Posterior cingulate gyrus (tissue), 11 donors: ENCODE measurements at regions of chr10 and their contacts with region 1.

Region 1: GRCh38 chr10:2839081-2839725 is 228.1 kb upstream of the PFKP start:
- DNase-seq: peak in 3 of 10 donors; percentile 20 to 44 (median 35)

Region 2: GRCh38 chr10:3043512-3044368 is 204.5 kb after region 1 on chr10:
- intact Hi-C with region 1: loop called (anchors 5 kb)
- DNase-seq: peak; percentile 38 to 96 (median 72)